OCI-LY7 (cell line): ENCODE measurements at regions of chrX and their contacts with region 1.

Region 1: GRCh38 chrX:13734278-13735172 is at the starts of genes OFD1 and TRAPPC2:
- DNase-seq: peak; percentile 97
- H3K4me3 ChIP-seq: peak within 1 kb of the TSS; percentile 85
- H3K27ac ChIP-seq: peak within 1 kb of the TSS; percentile 99
- H3K4me1 ChIP-seq: peaks cover 36% of the 10 kb centered on the region
- CTCF ChIP-seq: no peak; the same call in 1 of the 2 replicates
- total RNA-seq, gene OFD1: 60.7 and 71.0 TPM in 2 replicates
- total RNA-seq, gene TRAPPC2: 16.4 and 22.2 TPM in 2 replicates

Region 2: DNA sequence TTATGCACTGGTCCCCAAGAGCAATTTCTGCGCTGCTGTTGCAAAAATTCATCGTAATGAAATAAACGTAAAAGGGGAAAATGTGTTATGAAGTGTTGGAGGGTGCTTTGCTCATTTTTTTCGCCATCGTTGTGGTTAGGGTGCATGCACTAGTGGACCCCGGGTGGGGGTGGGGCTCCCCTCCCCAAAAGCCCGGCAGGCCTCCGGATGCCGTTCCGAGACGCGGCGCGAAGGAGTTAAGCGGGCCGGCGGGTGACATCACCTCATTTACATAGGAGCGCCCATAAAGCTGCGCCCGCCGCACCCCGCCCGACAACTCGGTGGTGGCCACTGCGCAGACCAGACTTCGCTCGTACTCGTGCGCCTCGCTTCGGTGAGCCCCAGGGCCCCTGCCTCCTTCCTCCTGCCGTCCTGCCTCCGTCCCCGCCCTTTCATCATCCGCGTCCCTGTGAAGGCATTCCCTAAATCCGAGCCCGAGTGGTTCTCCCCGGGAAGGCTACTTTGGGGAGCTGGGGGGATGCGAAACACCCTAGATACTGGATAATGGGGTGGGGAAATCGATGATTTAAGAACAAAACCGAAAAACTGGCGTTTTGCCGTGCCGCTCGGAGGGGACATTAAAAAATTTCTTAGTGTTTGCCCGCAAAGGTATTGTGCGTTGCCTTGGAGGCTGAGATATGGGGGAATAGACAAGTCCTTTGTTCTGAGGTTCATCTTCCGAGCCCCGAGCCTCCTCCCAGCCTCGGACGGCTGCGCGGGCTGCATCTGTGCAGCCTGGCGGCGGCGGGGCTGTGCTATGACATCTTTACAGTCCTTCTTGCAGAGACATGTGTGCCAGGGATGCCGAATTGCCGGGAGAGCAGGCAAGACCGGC is 759.5 kb before region 1 on chrX and contains the start of gene TMSB4X:
- CTCF ChIA-PET with region 1: no interaction called
- POLR2A ChIA-PET with region 1: no interaction called
- intact Hi-C with region 1: loop called (anchors 5 kb)
- DNase-seq: peak; percentile 87
- H3K4me3 ChIP-seq: peak within 1 kb of the TSS; percentile 99
- H3K27ac ChIP-seq: peak within 1 kb of the TSS; percentile 90
- H3K4me1 ChIP-seq: peaks cover 72% of the 10 kb centered on the region
- CTCF ChIP-seq: no peak
- total RNA-seq, gene TMSB4X: 1,355 and 1,476 TPM in 2 replicates

Region 3: GRCh38 chrX:13653022-13653693 is 81.4 kb before region 1 on chrX and contains the start of gene TCEANC:
- CTCF ChIA-PET with region 1: no interaction called
- POLR2A ChIA-PET with region 1: interaction called, 3 read pairs
- intact Hi-C with region 1: loop called (anchors 2 kb)
- DNase-seq: peak; percentile 94
- H3K4me3 ChIP-seq: peak within 1 kb of the TSS; percentile 80
- H3K27ac ChIP-seq: peak within 1 kb of the TSS; percentile 84
- H3K4me1 ChIP-seq: peaks cover 20% of the 10 kb centered on the region
- CTCF ChIP-seq: no peak
- total RNA-seq, gene TCEANC: 4.5 and 6.0 TPM in 2 replicates

Region 4: GRCh38 chrX:13721819-13722519 is 12.6 kb before region 1 on chrX:
- CTCF ChIA-PET with region 1: interaction called, 4 read pairs
- POLR2A ChIA-PET with region 1: interaction called, 17 read pairs
- intact Hi-C with region 1: no loop called
- DNase-seq: peak; percentile 66
- H3K4me3 ChIP-seq: peak overlapping the region; percentile 46
- H3K27ac ChIP-seq: peak overlapping the region; percentile 68
- H3K4me1 ChIP-seq: peaks cover 32% of the 10 kb centered on the region
- CTCF ChIP-seq: no peak

Region 5: DNA sequence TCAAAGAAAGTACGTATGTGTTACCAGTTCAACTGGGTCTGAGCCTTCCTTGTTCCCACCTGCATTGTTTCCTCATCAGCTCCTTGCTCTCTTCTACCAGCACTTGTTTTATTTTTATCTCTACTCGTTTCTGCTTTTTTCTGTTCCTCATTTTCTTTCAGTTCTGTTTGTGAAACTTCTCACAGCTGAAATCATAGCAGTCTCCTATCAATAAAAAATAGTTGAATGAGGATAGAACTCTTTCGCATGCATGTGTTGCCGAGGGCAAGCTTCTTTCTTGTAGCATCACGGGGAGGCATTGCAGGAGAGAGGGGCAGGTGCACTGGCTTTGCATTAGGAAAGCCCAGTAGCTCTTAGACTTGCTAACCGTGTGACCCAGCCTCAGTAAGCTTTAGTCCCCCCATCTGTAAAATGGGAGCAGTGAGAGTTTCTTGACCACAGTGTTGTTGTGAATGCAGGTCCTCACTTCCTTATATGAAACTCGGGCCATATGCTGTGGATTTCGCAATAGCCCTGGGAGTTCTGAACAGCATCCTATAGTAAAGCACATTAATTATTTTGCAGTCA is 24.7 kb after region 1 on chrX:
- CTCF ChIA-PET with region 1: interaction called, 3 read pairs
- POLR2A ChIA-PET with region 1: interaction called, 52 read pairs
- intact Hi-C with region 1: loop called (anchors 2 kb)
- DNase-seq: peak; percentile 83
- H3K4me3 ChIP-seq: peak overlapping the region; percentile 55
- H3K27ac ChIP-seq: peak overlapping the region; percentile 100
- H3K4me1 ChIP-seq: peaks cover 78% of the 10 kb centered on the region
- CTCF ChIP-seq: no peak

Region 6: DNA sequence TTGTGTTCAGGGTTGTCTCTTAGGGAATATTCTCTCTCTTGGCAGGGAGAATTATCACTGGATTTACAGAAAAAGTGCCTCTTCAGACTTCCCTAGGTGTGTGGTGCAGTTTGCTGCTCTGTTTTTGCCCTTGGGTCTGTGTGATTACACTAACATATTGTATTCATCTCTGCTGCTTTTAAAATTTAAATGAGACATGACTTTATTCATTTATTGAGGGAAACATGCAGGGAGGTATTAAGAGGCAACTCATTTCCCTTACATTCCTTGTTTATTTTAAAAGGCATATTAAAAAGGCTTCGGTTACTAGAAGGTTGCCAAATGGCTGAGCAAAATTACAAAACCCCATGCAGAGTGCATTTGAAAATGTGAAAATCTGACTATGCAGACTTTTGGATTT is 430.3 kb after region 1 on chrX:
- CTCF ChIA-PET with region 1: no interaction called
- POLR2A ChIA-PET with region 1: no interaction called
- intact Hi-C with region 1: no loop called
- DNase-seq: no peak
- H3K4me3 ChIP-seq: no peak overlapping the region
- H3K27ac ChIP-seq: no peak overlapping the region
- H3K4me1 ChIP-seq: no peaks in the 10 kb centered on the region
- CTCF ChIP-seq: no peak